PC-3 (cell line): ENCODE measurements at regions of chr7 and their contacts with region 1.

Region 1: GRCh38 chr7:22452142-22452959 is 47.6 kb downstream of the STEAP1B start:
- DNase-seq: peak; percentile 73
- ATAC-seq: peak; percentile 87
- H3K4me3 ChIP-seq: peak overlapping the region; percentile 62
- H3K27ac ChIP-seq: no peak overlapping the region
- H3K4me1 ChIP-seq: peaks cover 7% of the 10 kb centered on the region; the same call in 1 of the 2 replicates
- H3K27me3 ChIP-seq: no peaks in the 10 kb centered on the region
- CTCF ChIP-seq: peak; percentile 91

Region 2: DNA sequence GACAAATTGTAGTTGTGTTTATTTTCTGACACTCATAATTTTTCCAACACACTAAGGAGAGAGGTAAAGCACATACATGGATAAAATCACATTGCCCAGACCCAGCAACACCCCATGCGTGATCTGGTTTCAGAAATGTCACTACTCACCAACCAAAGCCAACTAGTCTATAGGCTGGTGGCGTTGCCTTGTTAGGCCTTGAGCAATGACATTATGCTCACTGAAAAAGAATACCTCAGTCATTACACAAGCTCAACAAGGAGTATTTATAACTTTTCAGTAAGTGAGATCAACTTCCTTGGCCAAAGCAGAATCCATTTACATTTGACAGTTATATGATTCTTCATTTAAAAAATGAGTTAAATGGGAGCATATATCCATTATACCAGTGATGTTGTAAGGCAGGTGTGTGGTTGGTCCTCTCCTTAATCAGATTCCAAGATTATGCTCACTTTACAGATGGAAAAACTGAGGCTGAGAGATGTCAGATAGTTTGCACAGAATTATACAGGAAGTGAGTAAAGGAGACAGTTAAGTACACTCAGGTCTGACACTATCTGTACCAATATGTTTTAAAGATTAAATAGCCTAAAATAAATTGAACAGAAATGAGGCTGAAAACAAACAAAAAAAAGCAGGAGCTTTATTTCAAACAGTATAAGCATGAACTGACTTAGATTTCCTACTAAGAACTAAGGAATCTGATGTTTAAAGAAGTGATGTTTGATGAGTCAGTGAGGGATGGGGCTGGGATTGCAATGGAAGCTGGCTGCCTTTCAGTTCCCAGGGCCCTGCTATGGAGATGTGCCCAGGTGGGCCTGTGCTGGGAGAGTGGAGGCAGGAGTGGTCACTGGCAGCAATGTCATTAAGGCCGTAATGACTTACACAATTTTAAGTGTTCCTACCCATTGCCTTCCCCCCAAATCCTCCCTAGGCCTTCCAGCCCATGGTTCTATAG is 213.7 kb before region 1 on chr7:
- CTCF ChIA-PET with region 1: no interaction called
- POLR2A ChIA-PET with region 1: no interaction called
- intact Hi-C with region 1: loop called (anchors 5 kb)
- DNase-seq: peak; percentile 68
- ATAC-seq: peak; percentile 94
- H3K4me3 ChIP-seq: no peak overlapping the region
- H3K27ac ChIP-seq: peak overlapping the region; percentile 45
- H3K4me1 ChIP-seq: peaks cover 26% of the 10 kb centered on the region
- H3K27me3 ChIP-seq: no peaks in the 10 kb centered on the region
- CTCF ChIP-seq: no peak

Region 3: DNA sequence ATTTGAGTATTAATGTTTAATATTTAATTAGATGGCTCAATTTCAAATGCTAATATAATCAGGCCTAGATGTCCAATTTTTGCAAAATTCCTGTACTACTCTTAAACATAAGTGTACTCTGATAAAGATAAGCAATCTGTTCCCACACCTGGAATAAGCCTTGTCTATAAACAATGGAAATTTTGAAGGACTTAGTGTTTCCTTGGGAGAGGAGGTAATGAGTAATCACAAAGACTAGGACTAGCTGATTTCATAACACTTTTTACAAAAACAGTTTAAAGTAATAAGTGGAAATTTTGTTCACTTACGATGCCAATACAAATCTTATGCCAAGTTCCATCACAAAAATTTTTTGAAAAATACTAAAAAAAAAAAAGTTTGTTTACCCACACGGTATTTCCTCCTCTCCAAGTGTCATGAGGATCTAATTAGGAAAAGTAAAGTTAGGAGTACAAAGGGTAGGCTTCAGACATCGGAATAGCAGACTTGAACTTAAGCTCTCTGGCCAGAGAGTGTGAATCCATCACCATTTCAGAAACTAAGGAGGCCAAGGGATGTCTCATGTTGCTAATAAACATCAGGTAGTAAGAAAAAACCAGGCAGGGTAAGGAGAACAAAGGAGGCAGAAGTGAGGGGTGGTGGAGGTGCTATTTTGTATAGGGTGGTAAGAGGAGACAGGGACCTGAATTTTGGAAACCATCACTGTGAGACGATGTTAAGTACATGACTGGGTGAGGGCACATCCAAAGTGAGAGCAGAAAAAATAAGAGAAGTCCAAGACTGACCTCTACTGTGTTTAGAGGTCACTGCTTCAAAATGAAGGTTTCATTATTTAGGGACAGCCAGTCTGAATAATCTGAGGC is 156.7 kb before region 1 on chr7:
- CTCF ChIA-PET with region 1: interaction called, 6 read pairs
- POLR2A ChIA-PET with region 1: no interaction called
- intact Hi-C with region 1: loop called (anchors 1 kb)
- DNase-seq: no peak
- ATAC-seq: no peak
- H3K4me3 ChIP-seq: no peak overlapping the region
- H3K27ac ChIP-seq: no peak overlapping the region
- H3K4me1 ChIP-seq: no peaks in the 10 kb centered on the region
- H3K27me3 ChIP-seq: no peaks in the 10 kb centered on the region
- CTCF ChIP-seq: no peak

Region 4: GRCh38 chr7:22361795-22362194 is 90.6 kb before region 1 on chr7:
- CTCF ChIA-PET with region 1: no interaction called
- POLR2A ChIA-PET with region 1: no interaction called
- intact Hi-C with region 1: no loop called
- DNase-seq: peak; percentile 95
- ATAC-seq: peak; percentile 78
- H3K4me3 ChIP-seq: no peak overlapping the region
- H3K27ac ChIP-seq: peak overlapping the region; percentile 30; the same call in 1 of the 2 replicates
- H3K4me1 ChIP-seq: peaks cover 23% of the 10 kb centered on the region
- H3K27me3 ChIP-seq: no peaks in the 10 kb centered on the region
- CTCF ChIP-seq: no peak